GM12878 (cell line): ENCODE measurements at regions of chr20 and their contacts with region 1.

Region 1: DNA sequence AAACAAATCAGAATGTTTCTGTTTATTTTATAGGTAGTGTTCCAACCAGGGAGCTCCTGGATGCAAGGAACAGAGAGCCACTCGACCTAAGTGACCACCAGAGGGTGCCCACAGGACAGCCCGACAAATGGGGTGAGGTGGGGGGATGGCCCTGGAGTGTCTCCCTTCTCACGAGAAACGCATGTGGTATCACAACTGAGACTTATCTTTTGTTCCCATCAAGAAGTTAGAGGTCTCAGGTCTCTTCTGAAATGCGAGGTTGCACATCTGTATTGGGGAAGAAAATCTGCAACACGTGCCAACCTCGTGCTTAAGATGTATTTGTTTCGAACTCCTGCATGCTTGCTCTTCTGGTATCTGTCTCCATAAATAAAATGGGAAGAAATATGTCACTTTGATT is 104.0 kb downstream of the ISM1 start:
- DNase-seq: no peak
- ATAC-seq: peak; percentile 62
- H3K4me3 ChIP-seq: no peak overlapping the region
- H3K27ac ChIP-seq: no peak overlapping the region
- H3K4me1 ChIP-seq: no peaks in the 10 kb centered on the region; the same call in 1 of the 2 replicates
- H3K27me3 ChIP-seq: no peaks in the 10 kb centered on the region
- CTCF ChIP-seq: peak; percentile 28 to 42 (median 30); a peak in 4 of 6 replicates
- EP300 ChIP-seq: no peak
- POLR2A ChIP-seq: no peak
- RAD21 ChIP-seq: peak; percentile 58; the same call in 1 of the 2 replicates

Region 2: GRCh38 chr20:13302647-13303450 is 22.2 kb before region 1 on chr20:
- CTCF ChIA-PET with region 1: interaction called, 12 read pairs
- POLR2A ChIA-PET with region 1: no interaction called
- RAD21 ChIA-PET with region 1: interaction called, 3 read pairs
- SMC1A ChIA-PET with region 1: interaction called, 10 read pairs
- in situ Hi-C with region 1: no loop called
- intact Hi-C with region 1: no loop called
- DNase-seq: no peak
- ATAC-seq: peak; percentile 99
- H3K4me3 ChIP-seq: no peak overlapping the region
- H3K27ac ChIP-seq: no peak overlapping the region
- H3K4me1 ChIP-seq: no peaks in the 10 kb centered on the region
- H3K27me3 ChIP-seq: no peaks in the 10 kb centered on the region
- CTCF ChIP-seq: peak; percentile 55 to 83 (median 70)
- EP300 ChIP-seq: no peak
- POLR2A ChIP-seq: no peak
- RAD21 ChIP-seq: peak; percentile 64

Region 3: GRCh38 chr20:13312300-13312699 is 12.7 kb before region 1 on chr20:
- CTCF ChIA-PET with region 1: interaction called, 14 read pairs
- POLR2A ChIA-PET with region 1: no interaction called
- RAD21 ChIA-PET with region 1: interaction called, 4 read pairs
- SMC1A ChIA-PET with region 1: interaction called, 5 read pairs
- in situ Hi-C with region 1: no loop called
- intact Hi-C with region 1: no loop called
- DNase-seq: no peak
- ATAC-seq: peak; percentile 73
- H3K4me3 ChIP-seq: no peak overlapping the region
- H3K27ac ChIP-seq: no peak overlapping the region
- H3K4me1 ChIP-seq: no peaks in the 10 kb centered on the region
- H3K27me3 ChIP-seq: no peaks in the 10 kb centered on the region
- CTCF ChIP-seq: no peak
- EP300 ChIP-seq: no peak
- POLR2A ChIP-seq: no peak
- RAD21 ChIP-seq: no peak

Region 4: DNA sequence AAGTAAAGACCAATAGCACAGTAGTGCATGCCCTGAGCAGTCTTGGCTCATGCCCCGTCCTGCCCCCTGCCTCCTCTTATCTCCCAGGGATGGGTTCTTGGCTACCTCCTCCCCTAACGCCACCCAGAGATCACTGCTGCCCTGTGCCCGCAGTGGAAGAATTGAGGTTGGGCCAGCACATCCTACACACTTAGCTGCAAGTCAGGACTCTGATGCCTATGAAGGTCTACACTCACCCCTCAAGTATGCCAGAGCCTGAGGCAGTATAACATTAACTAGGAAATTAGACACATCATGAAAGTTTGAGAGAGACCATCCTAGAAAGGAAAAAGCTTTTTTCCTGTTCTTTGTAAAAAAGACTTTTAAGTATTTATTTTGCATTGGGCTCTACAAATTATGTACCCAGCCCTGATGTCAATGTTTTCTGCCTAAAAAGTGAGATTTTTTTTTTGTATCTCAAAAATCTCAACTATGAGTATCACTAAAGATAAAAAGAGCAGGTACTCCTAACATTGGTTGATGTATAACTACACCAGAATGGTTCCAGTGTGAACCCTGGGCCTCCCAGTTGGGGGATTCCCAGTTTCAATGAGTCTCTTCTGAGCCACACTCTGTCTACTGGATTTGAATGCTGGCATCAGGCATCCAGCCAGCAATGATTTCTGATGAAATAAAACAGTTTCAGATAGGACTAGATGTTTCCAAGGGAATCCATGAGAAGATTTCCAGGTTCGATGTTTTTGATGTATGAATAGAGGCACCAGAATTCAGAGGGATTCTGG is 11.5 kb after region 1 on chr20:
- CTCF ChIA-PET with region 1: interaction called, 19 read pairs
- POLR2A ChIA-PET with region 1: interaction called, 6 read pairs
- RAD21 ChIA-PET with region 1: interaction called, 54 read pairs
- SMC1A ChIA-PET with region 1: interaction called, 165 read pairs
- in situ Hi-C with region 1: no loop called
- intact Hi-C with region 1: no loop called
- DNase-seq: no peak
- ATAC-seq: peak; percentile 84
- H3K4me3 ChIP-seq: no peak overlapping the region
- H3K27ac ChIP-seq: no peak overlapping the region
- H3K4me1 ChIP-seq: no peaks in the 10 kb centered on the region; the same call in 1 of the 2 replicates
- H3K27me3 ChIP-seq: no peaks in the 10 kb centered on the region
- CTCF ChIP-seq: no peak
- EP300 ChIP-seq: no peak
- POLR2A ChIP-seq: no peak
- RAD21 ChIP-seq: no peak

Region 5: GRCh38 chr20:13341781-13342277 is 16.8 kb after region 1 on chr20:
- CTCF ChIA-PET with region 1: interaction called, 19 read pairs
- POLR2A ChIA-PET with region 1: interaction called, 5 read pairs
- RAD21 ChIA-PET with region 1: interaction called, 54 read pairs
- SMC1A ChIA-PET with region 1: interaction called, 165 read pairs
- in situ Hi-C with region 1: no loop called
- intact Hi-C with region 1: no loop called
- DNase-seq: no peak
- ATAC-seq: peak; percentile 35
- H3K4me3 ChIP-seq: no peak overlapping the region
- H3K27ac ChIP-seq: no peak overlapping the region
- H3K4me1 ChIP-seq: no peaks in the 10 kb centered on the region; the same call in 1 of the 2 replicates
- H3K27me3 ChIP-seq: no peaks in the 10 kb centered on the region
- CTCF ChIP-seq: no peak
- EP300 ChIP-seq: no peak
- POLR2A ChIP-seq: no peak
- RAD21 ChIP-seq: no peak

Region 6: GRCh38 chr20:13581452-13581851 is 256.4 kb after region 1 on chr20:
- CTCF ChIA-PET with region 1: no interaction called
- POLR2A ChIA-PET with region 1: no interaction called
- RAD21 ChIA-PET with region 1: no interaction called
- SMC1A ChIA-PET with region 1: no interaction called
- in situ Hi-C with region 1: no loop called
- intact Hi-C with region 1: no loop called
- DNase-seq: no peak
- ATAC-seq: no peak
- H3K4me3 ChIP-seq: no peak overlapping the region
- H3K27ac ChIP-seq: no peak overlapping the region
- H3K4me1 ChIP-seq: no peaks in the 10 kb centered on the region
- H3K27me3 ChIP-seq: no peaks in the 10 kb centered on the region
- CTCF ChIP-seq: no peak
- EP300 ChIP-seq: no peak
- POLR2A ChIP-seq: no peak
- RAD21 ChIP-seq: no peak

Region 7: DNA sequence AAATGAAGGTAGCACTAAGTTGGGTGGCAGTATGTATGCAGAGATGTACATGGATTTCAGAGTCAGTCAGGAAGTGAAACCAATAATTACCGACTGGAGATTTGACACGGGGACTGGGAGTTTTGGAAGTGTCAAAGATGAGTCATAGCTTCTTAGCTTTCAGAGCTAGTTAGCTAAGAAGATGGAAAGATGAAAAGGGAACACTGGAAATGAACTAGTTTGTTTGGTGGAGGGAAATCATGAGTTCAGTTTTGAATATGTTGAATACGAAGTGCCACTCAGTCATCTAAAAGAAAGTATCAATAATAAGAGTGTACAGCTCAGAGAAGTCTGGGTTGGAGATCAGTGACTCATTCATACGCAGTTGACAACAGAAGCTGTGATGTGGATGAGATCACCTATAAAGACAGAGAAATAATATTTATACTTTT is 452.2 kb after region 1 on chr20:
- CTCF ChIA-PET with region 1: interaction called, 21 read pairs
- POLR2A ChIA-PET with region 1: no interaction called
- RAD21 ChIA-PET with region 1: interaction called, 13 read pairs
- SMC1A ChIA-PET with region 1: no interaction called
- in situ Hi-C with region 1: no loop called
- intact Hi-C with region 1: no loop called
- DNase-seq: no peak
- ATAC-seq: peak; percentile 57
- H3K4me3 ChIP-seq: no peak overlapping the region
- H3K27ac ChIP-seq: peak overlapping the region; percentile 15; the same call in 1 of the 2 replicates
- H3K4me1 ChIP-seq: peaks cover 13% of the 10 kb centered on the region; the same call in 1 of the 2 replicates
- H3K27me3 ChIP-seq: no peaks in the 10 kb centered on the region
- CTCF ChIP-seq: no peak
- EP300 ChIP-seq: no peak
- POLR2A ChIP-seq: no peak
- RAD21 ChIP-seq: no peak

Region 8: GRCh38 chr20:13831476-13831875 is 506.4 kb after region 1 on chr20:
- CTCF ChIA-PET with region 1: no interaction called
- POLR2A ChIA-PET with region 1: no interaction called
- RAD21 ChIA-PET with region 1: no interaction called
- SMC1A ChIA-PET with region 1: no interaction called
- in situ Hi-C with region 1: no loop called
- intact Hi-C with region 1: no loop called
- DNase-seq: no peak
- ATAC-seq: no peak
- H3K4me3 ChIP-seq: no peak overlapping the region
- H3K27ac ChIP-seq: no peak overlapping the region
- H3K4me1 ChIP-seq: no peaks in the 10 kb centered on the region
- H3K27me3 ChIP-seq: no peaks in the 10 kb centered on the region
- CTCF ChIP-seq: no peak
- EP300 ChIP-seq: no peak
- POLR2A ChIP-seq: no peak
- RAD21 ChIP-seq: no peak